ENCODE measurements at regions of chrX and their contacts with region 1.

Region 1: DNA sequence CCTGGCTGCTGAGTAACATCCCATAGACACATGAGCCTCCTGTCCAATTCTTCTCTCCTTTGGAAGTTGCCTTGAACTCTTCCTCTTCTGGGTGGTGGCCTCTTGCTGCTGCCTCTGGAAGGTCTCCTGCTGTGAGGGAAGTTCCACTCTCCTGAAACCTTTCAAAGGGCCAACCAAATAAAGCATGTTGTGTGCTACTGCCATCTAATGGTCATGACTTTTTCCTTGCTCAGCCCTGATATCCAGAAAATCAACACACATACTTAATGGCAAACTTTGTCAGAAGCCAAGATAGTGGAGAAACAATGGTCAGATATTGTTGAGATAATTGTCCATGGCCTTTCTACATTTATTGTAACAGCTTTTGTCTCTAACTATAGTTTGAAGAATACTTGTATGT is 19.1 kb upstream of the ZXDA start:
- DNase-seq: peak in 1 of 3 donors; percentile 22
- H3K4me3 ChIP-seq: no peak overlapping the region
- H3K4me3 Mint-ChIP-seq: no peak overlapping the region
- H3K27ac ChIP-seq: no peak overlapping the region
- H3K27ac Mint-ChIP-seq: no peak overlapping the region
- H3K4me1 ChIP-seq: no peaks in the 10 kb centered on the region
- H3K4me1 Mint-ChIP-seq: no peaks in the 10 kb centered on the region
- H3K27me3 ChIP-seq: no peaks in the 10 kb centered on the region
- H3K27me3 Mint-ChIP-seq: no peaks in the 10 kb centered on the region
- CTCF ChIP-seq: peak; percentile 27

Region 2: GRCh38 chrX:57573754-57574153 is 355.6 kb before region 1 on chrX:
- intact Hi-C with region 1: loop called in 1 of 2 experiments (anchors 10 kb)
- DNase-seq: peak in 2 of 3 donors; percentile 5 to 24
- H3K4me3 ChIP-seq: no peak overlapping the region
- H3K4me3 Mint-ChIP-seq: no peak overlapping the region
- H3K27ac ChIP-seq: no peak overlapping the region
- H3K27ac Mint-ChIP-seq: no peak overlapping the region
- H3K4me1 ChIP-seq: no peaks in the 10 kb centered on the region
- H3K4me1 Mint-ChIP-seq: no peaks in the 10 kb centered on the region
- H3K27me3 ChIP-seq: no peaks in the 10 kb centered on the region
- H3K27me3 Mint-ChIP-seq: peaks cover 0 to 4% (median 0%) of the 10 kb centered on the region in 3 donors
- CTCF ChIP-seq: peak; percentile 27

Region 3: DNA sequence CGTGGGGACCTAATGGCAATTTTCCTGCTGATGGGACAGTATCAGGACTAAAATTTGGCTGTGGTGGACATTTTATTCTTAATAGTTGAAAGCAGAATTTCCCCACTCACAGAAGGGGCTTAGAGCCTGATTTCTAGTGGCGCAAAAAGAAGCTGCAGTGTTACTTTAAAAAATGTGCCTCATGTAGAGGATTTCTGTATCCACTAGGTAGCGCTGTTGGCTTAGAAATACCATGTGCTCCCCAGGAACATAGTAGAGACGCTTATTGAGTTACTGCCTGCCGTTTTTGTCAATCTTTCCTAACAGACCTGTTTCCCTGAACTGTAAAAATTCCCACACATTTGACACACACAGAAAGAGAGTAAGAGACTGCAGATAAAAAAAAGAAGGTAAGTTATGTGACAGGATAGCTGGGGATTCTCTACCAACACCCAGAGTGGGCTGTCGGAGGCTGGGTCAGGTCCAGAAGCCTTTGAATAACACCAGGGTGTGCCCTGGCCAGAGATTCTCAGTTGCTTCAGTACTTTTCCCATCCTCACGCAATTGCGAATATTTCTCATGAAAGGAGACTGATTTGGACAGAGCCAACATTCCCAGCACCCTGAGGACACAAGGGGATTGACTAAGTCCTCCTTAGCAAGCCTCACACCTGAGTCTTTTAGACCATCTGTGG is 107.5 kb before region 1 on chrX:
- intact Hi-C with region 1: loop called in 1 of 2 experiments (anchors 10 kb)
- DNase-seq: peak; percentile 21 to 29 (median 27)
- H3K4me3 ChIP-seq: no peak overlapping the region
- H3K4me3 Mint-ChIP-seq: peak overlapping the region in 1 of 2 donors; percentile 31
- H3K27ac ChIP-seq: no peak overlapping the region
- H3K27ac Mint-ChIP-seq: peak overlapping the region in 1 of 7 donors; percentile 8
- H3K4me1 ChIP-seq: no peaks in the 10 kb centered on the region
- H3K4me1 Mint-ChIP-seq: peaks cover 3% of the 10 kb centered on the region
- H3K27me3 ChIP-seq: no peaks in the 10 kb centered on the region
- H3K27me3 Mint-ChIP-seq: peaks cover 1 to 3% (median 2%) of the 10 kb centered on the region in 3 donors
- CTCF ChIP-seq: peak; percentile 49